GM12878 (cell line): ENCODE measurements at regions of chr11 and their contacts with region 1.

Region 1: DNA sequence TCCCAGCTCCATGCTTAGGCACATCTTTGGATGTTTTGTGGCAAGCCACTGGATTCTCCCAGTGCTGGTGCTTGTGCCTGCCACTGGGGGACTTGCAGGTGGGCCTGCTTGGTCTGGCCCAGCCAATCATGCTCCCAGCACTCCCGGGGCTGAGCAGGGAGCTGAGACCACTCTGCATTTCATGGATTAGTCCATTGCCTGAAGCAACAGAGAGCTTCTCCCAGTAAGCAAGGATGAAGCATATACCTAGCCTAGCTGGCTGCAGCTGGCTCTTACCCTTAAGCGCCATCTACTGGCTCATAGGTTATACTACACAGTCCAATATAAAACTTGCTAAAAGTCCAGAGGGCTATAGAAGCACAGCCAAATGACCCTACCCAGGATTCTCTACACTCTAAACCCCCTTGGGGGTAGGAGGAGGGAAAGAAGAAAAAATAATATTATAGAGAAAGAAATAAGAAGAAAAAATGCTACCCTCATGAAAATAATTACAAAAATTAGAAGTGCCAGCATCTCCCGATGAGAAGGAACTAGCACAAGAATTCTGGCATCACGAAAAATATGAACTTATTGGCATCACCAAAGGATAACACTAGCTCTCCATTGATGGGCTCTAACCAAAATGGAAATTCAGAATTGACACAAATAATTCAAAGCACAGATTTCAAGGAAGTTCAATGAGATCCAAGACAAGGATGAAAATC is 275.3 kb downstream of the C11orf87 start:
- DNase-seq: no peak
- ATAC-seq: peak; percentile 96
- H3K4me3 ChIP-seq: no peak overlapping the region
- H3K27ac ChIP-seq: no peak overlapping the region
- H3K4me1 ChIP-seq: no peaks in the 10 kb centered on the region
- H3K27me3 ChIP-seq: no peaks in the 10 kb centered on the region
- CTCF ChIP-seq: peak; percentile 70 to 76 (median 75)
- EP300 ChIP-seq: no peak
- POLR2A ChIP-seq: no peak
- RAD21 ChIP-seq: peak; percentile 83

Region 2: GRCh38 chr11:108703916-108704315 is 993.4 kb before region 1 on chr11:
- CTCF ChIA-PET with region 1: interaction called, 30 read pairs
- POLR2A ChIA-PET with region 1: no interaction called
- RAD21 ChIA-PET with region 1: no interaction called
- SMC1A ChIA-PET with region 1: no interaction called
- in situ Hi-C with region 1: loop called (anchors 5 kb)
- intact Hi-C with region 1: no loop called
- DNase-seq: no peak
- ATAC-seq: no peak
- H3K4me3 ChIP-seq: no peak overlapping the region
- H3K27ac ChIP-seq: no peak overlapping the region
- H3K4me1 ChIP-seq: 0 out of 2 replicates have a peak, but pooled peaks cover 3% of the 10 kb centered on the region
- H3K27me3 ChIP-seq: no peaks in the 10 kb centered on the region
- CTCF ChIP-seq: no peak
- EP300 ChIP-seq: no peak
- POLR2A ChIP-seq: no peak
- RAD21 ChIP-seq: no peak

Region 3: GRCh38 chr11:108788565-108789199 is 908.6 kb before region 1 on chr11:
- CTCF ChIA-PET with region 1: interaction called, 3 read pairs
- POLR2A ChIA-PET with region 1: no interaction called
- RAD21 ChIA-PET with region 1: no interaction called
- SMC1A ChIA-PET with region 1: interaction called, 4 read pairs
- in situ Hi-C with region 1: loop called (anchors 10 kb)
- intact Hi-C with region 1: no loop called
- DNase-seq: no peak
- ATAC-seq: peak; percentile 84
- H3K4me3 ChIP-seq: no peak overlapping the region
- H3K27ac ChIP-seq: no peak overlapping the region
- H3K4me1 ChIP-seq: peaks cover 4% of the 10 kb centered on the region; the same call in 1 of the 2 replicates
- H3K27me3 ChIP-seq: no peaks in the 10 kb centered on the region
- CTCF ChIP-seq: peak; percentile 50 to 55 (median 51); a peak in 5 of 6 replicates
- EP300 ChIP-seq: no peak
- POLR2A ChIP-seq: no peak
- RAD21 ChIP-seq: peak; percentile 69

Region 4: DNA sequence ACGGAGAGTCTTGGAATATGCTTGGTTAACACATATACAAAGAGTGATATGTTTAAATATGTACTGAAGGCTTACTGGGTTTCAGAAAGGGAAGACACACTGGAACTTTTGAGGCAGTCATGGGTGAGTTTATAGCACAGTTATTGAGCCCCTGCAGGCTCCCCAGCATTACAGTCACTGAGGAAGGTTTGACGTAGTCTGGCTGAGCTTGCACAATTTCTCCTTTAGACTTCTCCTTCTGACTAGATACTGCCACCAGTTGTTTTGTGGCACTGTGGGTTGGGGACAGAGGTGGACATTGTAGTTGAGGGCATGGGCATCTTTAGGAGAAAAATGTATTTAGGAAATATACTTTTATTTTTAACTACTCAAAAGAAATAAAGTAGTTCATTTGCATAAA is 10.1 kb after region 1 on chr11:
- CTCF ChIA-PET with region 1: interaction called, 11 read pairs
- POLR2A ChIA-PET with region 1: no interaction called
- RAD21 ChIA-PET with region 1: no interaction called
- SMC1A ChIA-PET with region 1: interaction called, 3 read pairs
- in situ Hi-C with region 1: no loop called
- intact Hi-C with region 1: no loop called
- DNase-seq: no peak
- ATAC-seq: no peak
- H3K4me3 ChIP-seq: no peak overlapping the region
- H3K27ac ChIP-seq: no peak overlapping the region
- H3K4me1 ChIP-seq: no peaks in the 10 kb centered on the region
- H3K27me3 ChIP-seq: no peaks in the 10 kb centered on the region; a peak in 1 of 4 replicates
- CTCF ChIP-seq: no peak
- EP300 ChIP-seq: no peak
- POLR2A ChIP-seq: no peak
- RAD21 ChIP-seq: no peak